ENCODE measurements at regions of chrX and their contacts with region 1.

Region 1: DNA sequence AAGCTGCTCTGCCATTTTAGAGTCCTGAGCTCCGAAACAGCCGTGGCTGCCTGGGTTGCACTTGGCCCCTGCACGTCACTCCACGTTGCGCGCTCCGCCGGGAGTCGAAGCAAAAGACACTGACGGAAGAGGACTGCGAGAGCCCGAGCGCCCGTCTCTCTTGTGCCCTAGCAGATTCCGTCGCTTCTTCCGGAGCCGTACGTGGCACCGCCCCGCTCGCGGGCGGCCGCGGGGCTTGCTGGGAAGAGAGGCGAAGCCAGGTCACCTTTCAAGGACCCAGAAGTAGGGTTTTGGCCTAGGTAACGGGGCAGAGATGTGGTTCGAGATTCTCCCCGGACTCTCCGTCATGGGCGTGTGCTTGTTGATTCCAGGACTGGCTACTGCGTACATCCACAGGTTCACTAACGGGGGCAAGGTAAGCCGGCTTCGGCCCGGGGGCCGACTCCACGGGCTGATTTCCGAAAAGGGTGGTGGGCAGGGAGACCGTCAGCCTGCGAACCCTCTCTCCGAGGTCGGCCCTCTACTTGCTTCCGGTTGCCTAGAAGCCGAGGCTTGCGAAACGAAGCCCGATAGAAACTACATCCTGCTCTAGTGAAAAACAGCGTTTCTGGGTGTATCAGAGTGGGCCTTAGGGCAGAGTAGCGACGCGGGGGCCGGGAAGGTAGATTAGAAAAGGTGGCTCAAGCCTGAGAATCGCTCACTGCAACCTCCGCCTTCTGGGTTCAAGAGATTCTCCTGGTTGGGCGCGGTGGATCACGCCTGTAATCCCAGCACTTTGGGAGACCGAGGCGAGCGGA is at the starts of genes NDUFA1 and RNF113A:
- DNase-seq: peak; percentile 85
- H3K4me3 Mint-ChIP-seq: peak within 1 kb of the TSS; percentile 99
- H3K27ac Mint-ChIP-seq: peak within 1 kb of the TSS; percentile 100
- H3K4me1 Mint-ChIP-seq: peaks cover 5% of the 10 kb centered on the region
- H3K27me3 Mint-ChIP-seq: no peaks in the 10 kb centered on the region
- total RNA-seq, gene NDUFA1: 71.2 and 72.8 TPM in 2 replicates
- total RNA-seq, gene RNF113A: 28.8 and 29.7 TPM in 2 replicates

Region 2: DNA sequence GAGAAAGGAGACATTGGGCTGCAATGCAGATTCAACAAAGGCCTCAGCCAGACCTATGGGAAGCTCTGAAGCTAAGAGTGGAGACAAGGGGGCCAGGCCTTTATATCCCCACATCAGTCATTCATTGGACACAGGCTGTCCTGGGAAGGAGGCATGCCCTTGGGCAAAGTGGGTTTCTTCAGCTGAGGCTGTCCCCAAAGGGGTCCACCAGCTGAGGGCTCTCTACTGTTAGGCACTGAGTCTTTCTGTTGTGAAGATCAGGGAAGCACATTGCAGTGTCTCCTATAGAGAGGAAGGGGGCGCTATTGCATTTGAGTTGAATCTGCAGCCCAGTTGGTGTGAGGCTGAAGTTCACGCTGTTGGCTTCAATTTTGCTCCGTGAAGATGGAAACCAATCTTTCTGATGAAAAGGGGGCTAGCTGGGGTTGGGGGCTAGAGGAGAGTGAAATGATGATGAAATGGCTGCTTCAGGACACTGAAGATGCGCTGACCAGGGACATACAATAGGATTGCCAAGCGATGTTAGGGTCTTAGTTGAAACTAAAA is 355.6 kb before region 1 on chrX:
- intact Hi-C with region 1: loop called (anchors 5 kb)
- DNase-seq: peak; percentile 25
- H3K4me3 Mint-ChIP-seq: no peak overlapping the region
- H3K27ac Mint-ChIP-seq: peak overlapping the region; percentile 2
- H3K4me1 Mint-ChIP-seq: peaks cover 8% of the 10 kb centered on the region
- H3K27me3 Mint-ChIP-seq: peaks cover 2% of the 10 kb centered on the region

Region 3: GRCh38 chrX:119606280-119607015 is 265.3 kb before region 1 on chrX and contains the start of gene NKRF:
- intact Hi-C with region 1: loop called (anchors 1 kb)
- DNase-seq: peak; percentile 86
- H3K4me3 Mint-ChIP-seq: peak within 1 kb of the TSS; percentile 96
- H3K27ac Mint-ChIP-seq: peak within 1 kb of the TSS; percentile 97
- H3K4me1 Mint-ChIP-seq: peaks cover 30% of the 10 kb centered on the region
- H3K27me3 Mint-ChIP-seq: no peaks in the 10 kb centered on the region
- total RNA-seq, gene NKRF: 26.8 and 29.0 TPM in 2 replicates

Region 4: GRCh38 chrX:119791438-119792231 is 80.2 kb before region 1 on chrX and contains the start of gene RPL39:
- intact Hi-C with region 1: loop called (anchors 1 kb)
- DNase-seq: peak; percentile 75
- H3K4me3 Mint-ChIP-seq: peak within 1 kb of the TSS; percentile 96
- H3K27ac Mint-ChIP-seq: peak within 1 kb of the TSS; percentile 95
- H3K4me1 Mint-ChIP-seq: peaks cover 10% of the 10 kb centered on the region
- H3K27me3 Mint-ChIP-seq: no peaks in the 10 kb centered on the region
- total RNA-seq, gene RPL39: 1,853 and 1,912 TPM in 2 replicates

Region 5: DNA sequence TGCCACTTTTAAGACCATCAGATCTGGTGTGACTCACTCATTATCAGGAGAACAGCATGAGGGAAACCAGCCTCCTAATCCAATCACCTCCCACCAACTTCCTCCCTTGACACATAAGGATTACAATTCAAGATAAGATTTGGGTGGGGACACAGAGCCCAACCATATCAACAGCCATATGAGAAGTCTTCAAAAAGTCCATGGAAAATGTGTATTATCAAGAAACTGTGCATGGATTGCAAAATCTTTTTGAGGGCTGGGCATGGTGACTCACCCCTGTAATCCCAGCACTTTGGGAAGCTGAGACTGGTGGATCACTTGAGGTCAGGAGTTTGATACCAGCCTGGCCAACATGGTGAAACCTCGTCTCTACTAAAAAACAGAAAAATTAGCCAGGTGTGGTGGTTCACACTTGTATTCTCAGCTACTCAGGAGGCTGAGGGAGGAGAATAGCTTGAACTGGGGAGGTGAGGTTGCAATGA is 62.6 kb before region 1 on chrX:
- intact Hi-C with region 1: no loop called
- DNase-seq: no peak
- H3K4me3 Mint-ChIP-seq: no peak overlapping the region
- H3K27ac Mint-ChIP-seq: no peak overlapping the region
- H3K4me1 Mint-ChIP-seq: no peaks in the 10 kb centered on the region
- H3K27me3 Mint-ChIP-seq: peaks cover 2% of the 10 kb centered on the region

Region 6: GRCh38 chrX:119852382-119853353 is 19.1 kb before region 1 on chrX and contains the start of gene UPF3B:
- intact Hi-C with region 1: loop called (anchors 1 kb)
- DNase-seq: peak; percentile 90
- H3K4me3 Mint-ChIP-seq: peak within 1 kb of the TSS; percentile 94
- H3K27ac Mint-ChIP-seq: peak within 1 kb of the TSS; percentile 97
- H3K4me1 Mint-ChIP-seq: peaks cover 8% of the 10 kb centered on the region
- H3K27me3 Mint-ChIP-seq: no peaks in the 10 kb centered on the region
- total RNA-seq, gene UPF3B: 11.0 and 13.0 TPM in 2 replicates

Region 7: DNA sequence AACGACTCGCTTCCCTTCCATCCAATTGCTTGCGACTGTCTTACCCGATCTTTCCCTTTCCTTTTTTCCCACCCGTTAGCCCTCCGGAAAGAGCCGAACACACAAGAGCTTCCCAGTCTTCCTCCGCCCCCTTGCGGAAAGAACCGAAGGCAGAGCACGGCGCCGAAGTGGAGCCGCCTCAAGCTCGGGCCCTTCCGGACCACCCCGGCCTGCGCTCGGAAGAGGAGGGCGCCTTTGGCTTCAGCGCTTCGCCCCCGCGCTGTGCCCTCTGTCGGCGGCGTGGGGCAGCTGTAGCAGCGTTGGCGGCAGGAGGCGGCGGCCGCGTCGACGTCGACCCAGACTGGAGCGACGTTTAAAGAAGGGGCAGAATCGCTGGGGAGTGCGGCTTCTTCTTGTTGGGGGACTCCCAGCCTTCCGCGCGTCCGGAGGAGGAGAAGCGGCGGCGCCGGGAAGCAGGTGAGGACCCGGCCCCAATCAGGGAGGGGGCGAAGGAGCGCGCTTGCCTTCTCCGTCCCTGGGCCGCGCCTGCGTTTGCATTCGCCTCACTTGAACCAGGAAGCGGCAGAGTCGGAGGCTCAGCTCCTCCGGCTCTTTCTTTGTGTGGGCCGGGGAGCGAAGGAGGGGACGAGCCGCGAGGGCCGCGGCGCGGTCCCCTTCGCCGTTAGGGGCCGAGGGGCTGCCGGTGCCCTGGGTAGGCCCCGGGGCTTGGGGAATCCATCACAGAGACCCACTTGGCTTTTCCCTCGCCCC is 378.9 kb after region 1 on chrX and contains the start of gene ZBTB33:
- intact Hi-C with region 1: loop called (anchors 2 kb)
- DNase-seq: peak; percentile 79
- H3K4me3 Mint-ChIP-seq: peak within 1 kb of the TSS; percentile 96
- H3K27ac Mint-ChIP-seq: peak within 1 kb of the TSS; percentile 96
- H3K4me1 Mint-ChIP-seq: peaks cover 17% of the 10 kb centered on the region
- H3K27me3 Mint-ChIP-seq: no peaks in the 10 kb centered on the region
- total RNA-seq, gene ZBTB33: 13.0 and 13.4 TPM in 2 replicates